ENCODE measurements at regions of chr3 and their contacts with region 1.

Region 1: DNA sequence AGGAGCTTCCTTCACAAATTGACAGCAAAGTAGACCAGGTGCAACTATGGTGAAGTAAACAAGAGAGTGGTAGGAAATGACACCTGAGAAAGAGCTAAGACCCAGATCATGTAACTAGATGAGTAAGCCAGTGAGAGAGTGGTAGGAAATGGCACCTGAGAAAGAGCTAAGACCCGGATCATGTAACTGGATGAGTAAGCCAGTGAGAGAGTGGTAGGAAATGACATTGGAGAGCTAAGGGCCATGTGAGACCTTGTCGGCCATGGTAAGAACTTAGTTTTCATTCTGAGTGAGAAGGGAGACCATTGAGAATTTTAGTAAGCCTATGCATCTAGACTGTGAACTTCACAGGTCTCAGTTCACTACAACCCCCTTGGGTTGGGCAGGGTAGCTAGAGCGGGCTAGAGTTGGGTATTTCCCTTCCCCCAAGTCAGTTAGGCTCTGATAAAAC is 5.4 kb upstream of the SENP7 start:
- DNase-seq: peak; percentile 65
- ATAC-seq: peak; percentile 93
- H3K4me3 Mint-ChIP-seq: peak overlapping the region; percentile 4
- H3K27ac Mint-ChIP-seq: peak overlapping the region; percentile 80
- H3K4me1 Mint-ChIP-seq: peaks cover 56% of the 10 kb centered on the region
- H3K27me3 Mint-ChIP-seq: no peaks in the 10 kb centered on the region

Region 2: DNA sequence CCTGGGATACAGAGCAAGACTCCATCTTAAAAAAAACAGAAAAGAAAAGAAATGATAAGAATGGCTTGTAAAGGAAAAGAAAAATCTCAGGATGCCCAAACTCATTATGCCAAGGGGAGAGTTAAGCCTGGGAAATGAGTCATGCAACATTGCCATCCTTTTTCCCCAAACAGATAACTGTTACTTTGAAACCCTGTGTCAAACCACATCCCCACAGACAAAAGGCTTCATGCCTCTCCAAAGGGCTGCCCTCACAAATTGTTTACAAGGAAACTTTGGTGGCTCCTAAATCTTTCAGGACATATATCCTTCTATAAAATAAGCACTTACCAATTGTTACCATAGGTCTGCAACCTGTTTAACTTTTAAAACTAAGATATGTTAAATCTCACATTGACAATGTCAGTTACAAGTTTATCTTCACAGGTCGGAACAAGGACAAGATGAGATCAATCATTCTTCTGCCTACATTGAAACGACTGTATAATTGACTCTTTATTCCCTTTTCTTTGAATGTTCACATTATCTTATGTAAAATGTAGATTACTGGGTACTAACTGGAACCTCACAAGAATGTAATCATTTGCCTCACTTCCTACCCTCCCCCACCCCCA is 13.1 kb after region 1 on chr3:
- CTCF ChIA-PET with region 1: interaction called, 38 read pairs
- POLR2A ChIA-PET with region 1: interaction called, 31 read pairs
- DNase-seq: peak; percentile 31
- ATAC-seq: peak; percentile 79
- H3K4me3 Mint-ChIP-seq: no peak overlapping the region
- H3K27ac Mint-ChIP-seq: peak overlapping the region; percentile 76
- H3K4me1 Mint-ChIP-seq: peaks cover 40% of the 10 kb centered on the region
- H3K27me3 Mint-ChIP-seq: no peaks in the 10 kb centered on the region

Region 3: DNA sequence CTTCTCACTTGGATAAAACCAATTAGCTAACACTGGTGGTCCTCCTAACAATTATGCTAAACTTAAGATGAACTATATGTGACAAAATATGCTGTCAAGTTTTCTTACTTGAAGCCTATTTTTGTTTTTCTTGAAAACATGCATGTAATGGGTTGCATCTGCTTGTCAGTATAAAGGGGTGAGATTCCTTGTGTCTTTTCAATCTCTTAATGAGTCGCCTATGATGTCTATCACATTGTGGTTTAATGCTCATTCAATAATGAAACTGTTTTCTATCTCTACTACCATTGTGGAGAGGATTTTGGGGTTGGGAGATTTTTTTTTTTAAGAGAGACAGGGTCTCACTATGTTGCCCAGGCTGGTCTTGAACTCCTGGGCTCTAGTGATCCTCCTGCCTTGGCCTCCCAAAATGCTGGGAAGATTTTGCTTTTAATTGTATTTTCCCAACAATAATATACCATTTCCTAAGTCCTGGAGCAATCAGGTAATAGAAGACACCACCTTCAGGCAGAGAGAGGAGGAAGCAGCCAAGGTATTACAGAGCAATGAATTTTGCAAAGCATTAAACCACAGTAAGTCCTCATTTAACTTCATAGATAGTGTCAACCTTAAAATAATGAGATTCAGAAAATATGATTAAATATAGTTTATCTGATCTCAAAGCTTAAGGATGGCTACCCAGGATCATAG is 25.9 kb after region 1 on chr3:
- CTCF ChIA-PET with region 1: interaction called, 31 read pairs
- POLR2A ChIA-PET with region 1: interaction called, 17 read pairs
- DNase-seq: no peak
- ATAC-seq: no peak
- H3K4me3 Mint-ChIP-seq: no peak overlapping the region
- H3K27ac Mint-ChIP-seq: peak overlapping the region; percentile 47
- H3K4me1 Mint-ChIP-seq: peaks cover 26% of the 10 kb centered on the region
- H3K27me3 Mint-ChIP-seq: no peaks in the 10 kb centered on the region

Region 4: DNA sequence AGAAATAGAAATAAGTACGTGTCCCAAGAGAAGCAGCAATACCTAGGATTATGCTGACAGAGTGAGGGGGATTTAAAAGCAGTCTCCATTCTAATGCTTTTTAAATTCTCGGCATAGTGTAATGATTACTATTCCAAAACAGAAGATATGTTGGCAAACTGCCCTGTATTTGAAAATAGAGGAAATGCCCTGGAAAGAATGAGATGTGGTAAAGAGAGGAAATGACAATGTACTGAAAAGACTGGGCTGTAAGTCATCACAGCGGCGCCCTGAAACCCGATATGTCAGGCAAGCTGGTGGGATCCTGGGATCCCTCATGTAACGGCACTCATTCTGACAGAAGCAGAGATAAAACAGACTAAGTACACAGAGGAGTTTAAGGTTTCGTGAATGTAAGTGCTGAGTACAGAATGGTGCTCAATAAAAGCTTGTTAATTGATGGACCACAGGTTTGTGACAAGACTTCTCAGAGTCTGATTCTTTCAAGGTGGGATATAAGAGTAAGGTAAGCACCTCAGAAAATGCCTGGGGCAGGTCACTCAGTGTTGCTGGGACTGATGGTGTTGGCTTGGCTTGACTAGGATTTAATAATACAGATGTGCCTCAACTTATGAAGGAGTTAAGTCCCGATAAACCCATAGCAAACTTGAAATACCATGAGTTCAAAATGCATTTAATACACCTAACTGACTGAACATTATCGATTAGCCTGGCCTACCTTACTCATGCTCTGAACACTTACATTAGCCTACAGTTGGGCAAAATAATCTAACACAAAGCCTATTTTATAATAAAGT is 422.3 kb after region 1 on chr3:
- CTCF ChIA-PET with region 1: no interaction called
- POLR2A ChIA-PET with region 1: no interaction called
- DNase-seq: no peak
- ATAC-seq: no peak
- H3K4me3 Mint-ChIP-seq: no peak overlapping the region
- H3K27ac Mint-ChIP-seq: no peak overlapping the region
- H3K4me1 Mint-ChIP-seq: peaks cover 34% of the 10 kb centered on the region
- H3K27me3 Mint-ChIP-seq: no peaks in the 10 kb centered on the region